ENCODE measurements at regions of chr7 and their contacts with region 1.

Region 1: DNA sequence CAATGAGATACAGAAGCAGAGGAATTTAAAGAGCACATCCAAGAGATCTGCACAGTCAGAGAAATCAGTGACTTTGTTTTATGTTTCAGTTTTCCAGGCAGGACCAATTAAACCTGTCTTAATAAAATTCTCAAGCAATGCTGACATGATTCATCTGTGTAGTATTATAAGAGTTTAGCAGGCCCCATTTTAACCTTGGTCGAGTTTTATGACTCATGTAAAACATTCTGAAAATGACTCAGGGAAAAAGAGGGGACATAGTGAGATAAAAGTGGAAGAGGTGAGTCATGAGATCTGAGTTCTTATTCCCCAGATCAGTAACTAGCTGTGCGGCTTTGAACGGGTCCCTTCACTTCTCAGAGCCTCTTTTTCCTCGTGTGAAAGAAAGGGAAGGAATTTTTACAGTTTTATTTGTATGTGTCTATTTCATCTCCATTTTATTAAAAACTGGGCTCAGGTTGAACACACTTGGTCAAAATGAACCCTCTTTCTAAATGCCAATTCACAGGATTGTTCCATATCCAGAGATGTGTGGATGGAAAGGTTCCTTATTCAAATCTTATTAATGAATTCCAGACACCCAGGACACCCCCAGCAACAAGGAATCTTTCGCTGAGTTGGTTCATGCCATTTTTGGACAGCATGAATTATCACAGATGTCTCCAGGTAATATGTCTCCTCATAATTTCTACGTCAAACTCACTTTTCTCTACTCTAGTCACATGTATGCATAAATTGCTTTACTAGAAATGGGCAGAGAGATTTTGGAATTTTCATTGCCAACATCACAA is 143.2 kb downstream of the JAZF1 start:
- DNase-seq: no peak
- H3K4me3 Mint-ChIP-seq: peak overlapping the region; percentile 34
- H3K27ac Mint-ChIP-seq: peak overlapping the region; percentile 70
- H3K4me1 Mint-ChIP-seq: peaks cover 31% of the 10 kb centered on the region
- H3K27me3 Mint-ChIP-seq: peaks cover 16% of the 10 kb centered on the region

Region 2: GRCh38 chr7:26151953-26152781 is 1885.2 kb before region 1 on chr7 and contains the start of gene NFE2L3:
- intact Hi-C with region 1: loop called (anchors 10 kb)
- DNase-seq: peak; percentile 83
- H3K4me3 Mint-ChIP-seq: peak within 1 kb of the TSS; percentile 97
- H3K27ac Mint-ChIP-seq: peak within 1 kb of the TSS; percentile 97
- H3K4me1 Mint-ChIP-seq: peaks cover 60% of the 10 kb centered on the region
- H3K27me3 Mint-ChIP-seq: peaks cover 2% of the 10 kb centered on the region
- total RNA-seq, gene NFE2L3: 80.1 TPM in 2 replicates

Region 3: GRCh38 chr7:27662490-27663205 is 374.8 kb before region 1 on chr7 and contains the start of gene HIBADH:
- intact Hi-C with region 1: loop called (anchors 1 kb)
- DNase-seq: peak; percentile 96
- H3K4me3 Mint-ChIP-seq: peak within 1 kb of the TSS; percentile 86
- H3K27ac Mint-ChIP-seq: peak within 1 kb of the TSS; percentile 81
- H3K4me1 Mint-ChIP-seq: peaks cover 30% of the 10 kb centered on the region
- H3K27me3 Mint-ChIP-seq: no peaks in the 10 kb centered on the region
- total RNA-seq, gene HIBADH: 21.0 and 21.2 TPM in 2 replicates

Region 4: GRCh38 chr7:27901028-27901760 is 136.2 kb before region 1 on chr7:
- intact Hi-C with region 1: loop called (anchors 1 kb)
- DNase-seq: peak; percentile 32
- H3K4me3 Mint-ChIP-seq: no peak overlapping the region
- H3K27ac Mint-ChIP-seq: no peak overlapping the region
- H3K4me1 Mint-ChIP-seq: peaks cover 44% of the 10 kb centered on the region
- H3K27me3 Mint-ChIP-seq: peaks cover 9% of the 10 kb centered on the region

Region 5: GRCh38 chr7:28078036-28078901 is 40.9 kb after region 1 on chr7:
- intact Hi-C with region 1: loop called (anchors 5 kb)
- DNase-seq: peak; percentile 12
- H3K4me3 Mint-ChIP-seq: no peak overlapping the region
- H3K27ac Mint-ChIP-seq: no peak overlapping the region
- H3K4me1 Mint-ChIP-seq: no peaks in the 10 kb centered on the region
- H3K27me3 Mint-ChIP-seq: peaks cover 11% of the 10 kb centered on the region

Region 6: DNA sequence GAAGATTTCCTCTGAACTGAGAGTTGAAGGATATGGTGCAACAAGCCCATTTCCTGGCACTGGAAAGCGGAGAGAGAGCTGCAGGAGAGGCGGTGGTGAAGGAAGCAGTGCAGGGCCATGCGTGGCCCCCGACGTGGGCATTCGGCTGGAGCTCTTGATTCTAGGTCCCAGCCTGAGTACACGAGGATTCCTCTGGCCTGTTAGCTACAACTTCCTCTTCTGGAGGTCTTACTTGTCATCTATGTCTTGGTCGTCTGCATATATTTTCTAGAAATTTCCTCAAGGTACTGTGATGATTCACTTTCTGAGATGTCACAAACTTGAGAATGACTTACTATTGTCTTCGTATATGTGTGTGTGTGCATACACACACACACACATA is 202.4 kb after region 1 on chr7:
- intact Hi-C with region 1: loop called (anchors 1 kb)
- DNase-seq: no peak
- H3K4me3 Mint-ChIP-seq: peak overlapping the region; percentile 15
- H3K27ac Mint-ChIP-seq: peak overlapping the region; percentile 79
- H3K4me1 Mint-ChIP-seq: peaks cover 11% of the 10 kb centered on the region
- H3K27me3 Mint-ChIP-seq: peaks cover 48% of the 10 kb centered on the region

Measured in activated T-helper 1 cell treated with anti-CD3 and anti-CD28 coated beads, Interleukin-12 subunit alpha, Interleukin-12 subunit beta, Interleukin-2, Interleukin-4 antibody, amounts not matched to agents 30 ng/mL and 10 ng/mL and 1 ng/mL, durations not matched to agents 14 hours and 24 hours and 36 hours (primary cell).